Activated naive CD4-positive, alpha-beta T cell treated with anti-CD3 and anti-CD28 coated beads, Interleukin-2, amount 10 ng/mL, durations not matched to agents 7 days and 5 days (primary cell): ENCODE measurements at regions of chr2 and their contacts with region 1.

Region 1: GRCh38 chr2:158753641-158754611 is 41.2 kb upstream of the DAPL1 start:
- DNase-seq: peak; percentile 39
- H3K4me3 Mint-ChIP-seq: no peak overlapping the region
- H3K27ac Mint-ChIP-seq: no peak overlapping the region
- H3K4me1 Mint-ChIP-seq: no peaks in the 10 kb centered on the region
- H3K27me3 Mint-ChIP-seq: peaks cover 7% of the 10 kb centered on the region

Region 2: GRCh38 chr2:158034199-158034866 is 719.6 kb before region 1 on chr2:
- CTCF ChIA-PET with region 1: interaction called, 67 read pairs
- DNase-seq: peak; percentile 42
- H3K4me3 Mint-ChIP-seq: no peak overlapping the region
- H3K27ac Mint-ChIP-seq: no peak overlapping the region
- H3K4me1 Mint-ChIP-seq: no peaks in the 10 kb centered on the region
- H3K27me3 Mint-ChIP-seq: peaks cover 27% of the 10 kb centered on the region

Region 3: GRCh38 chr2:158179660-158180059 is 574.3 kb before region 1 on chr2:
- CTCF ChIA-PET with region 1: interaction called, 41 read pairs
- DNase-seq: no peak
- H3K4me3 Mint-ChIP-seq: no peak overlapping the region
- H3K27ac Mint-ChIP-seq: no peak overlapping the region
- H3K4me1 Mint-ChIP-seq: no peaks in the 10 kb centered on the region
- H3K27me3 Mint-ChIP-seq: peaks cover 20% of the 10 kb centered on the region

Region 4: GRCh38 chr2:159044804-159045286 is 290.9 kb after region 1 on chr2:
- CTCF ChIA-PET with region 1: no interaction called
- DNase-seq: no peak
- H3K4me3 Mint-ChIP-seq: no peak overlapping the region
- H3K27ac Mint-ChIP-seq: no peak overlapping the region
- H3K4me1 Mint-ChIP-seq: no peaks in the 10 kb centered on the region
- H3K27me3 Mint-ChIP-seq: peaks cover 8% of the 10 kb centered on the region